ENCODE measurements at regions of chr17 and their contacts with region 1.

Region 1: DNA sequence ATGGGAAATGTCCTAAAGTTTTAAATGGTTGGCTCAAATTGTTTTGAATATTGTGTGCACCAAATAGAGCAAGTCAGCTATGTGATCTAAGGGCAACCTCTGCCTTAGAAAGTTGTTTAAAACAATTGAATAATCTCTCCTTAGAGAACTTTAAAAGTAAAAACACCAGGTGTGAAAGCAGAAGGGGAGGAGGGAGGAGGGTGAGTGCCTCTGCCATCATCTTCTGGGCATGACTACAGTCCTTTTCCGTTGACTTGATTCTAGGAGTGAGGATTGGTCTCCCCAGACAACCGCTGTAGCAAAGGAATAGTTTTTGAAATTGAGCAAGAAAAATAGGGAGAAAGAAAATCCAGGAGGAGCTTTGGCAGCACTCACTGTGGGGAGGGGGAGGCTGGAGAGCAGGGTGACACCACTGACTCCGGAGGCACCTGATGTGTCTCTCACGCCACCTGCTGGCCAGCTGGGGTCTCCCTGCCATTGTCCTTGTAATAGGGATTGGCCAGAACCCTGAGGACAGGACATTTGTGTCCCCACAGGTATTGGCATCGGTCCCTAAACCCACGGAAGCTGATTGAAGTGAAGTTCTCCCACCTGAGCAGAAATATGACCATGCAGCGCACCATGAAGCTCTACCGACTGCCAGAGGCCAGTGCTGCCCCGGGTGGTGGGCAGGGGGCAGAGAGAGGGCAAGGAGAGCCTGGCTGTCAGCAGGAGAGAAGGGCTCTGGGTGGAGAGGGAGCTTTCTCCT is 33.3 kb downstream of the PLCD3 start:
- DNase-seq: peak; percentile 96
- H3K4me3 ChIP-seq: no peak overlapping the region
- H3K27ac ChIP-seq: peak overlapping the region; percentile 61 to 91 (median 76)
- H3K4me1 ChIP-seq: peaks cover 42 to 54% (median 48%) of the 10 kb centered on the region in 4 donors
- H3K27me3 ChIP-seq: no peaks in the 10 kb centered on the region
- CTCF ChIP-seq: peak; percentile 85 to 92 (median 90)
- EP300 ChIP-seq: no peak
- POLR2A ChIP-seq: no peak

Region 2: DNA sequence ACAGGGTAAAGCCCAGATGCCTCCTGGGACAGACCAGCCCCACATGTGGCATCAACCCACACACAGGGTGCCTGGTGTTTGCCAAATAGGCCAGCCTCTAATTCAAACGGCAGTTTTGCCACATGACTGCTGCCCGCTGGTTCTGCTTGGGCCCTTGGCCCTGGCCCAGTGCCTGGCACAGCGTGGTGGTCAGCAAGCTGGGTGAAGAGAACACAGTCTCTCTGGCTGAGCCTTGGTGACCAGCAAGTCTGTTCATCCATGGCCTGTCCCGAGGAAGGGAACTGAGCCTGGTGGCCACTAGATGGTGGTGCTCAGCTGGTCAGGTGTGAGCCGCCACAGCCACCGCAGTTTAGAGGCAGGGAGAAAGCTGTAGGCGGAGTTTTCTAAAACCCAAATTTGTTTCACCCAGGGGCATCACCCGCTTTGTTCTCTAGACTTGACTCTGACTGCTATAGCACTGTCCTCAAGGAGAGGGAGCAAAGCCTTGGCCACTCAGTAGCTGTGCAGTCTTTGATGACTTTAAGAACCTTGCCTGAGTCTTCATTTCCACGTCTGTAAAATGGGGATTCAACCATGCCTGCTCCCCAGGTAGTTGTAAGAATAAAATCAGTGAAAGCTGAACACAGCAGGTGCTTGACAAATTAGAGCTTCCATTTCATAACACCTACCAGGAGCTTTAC is 179.0 kb before region 1 on chr17:
- intact Hi-C with region 1: loop called (anchors 2 kb)
- DNase-seq: no peak
- H3K4me3 ChIP-seq: no peak overlapping the region
- H3K27ac ChIP-seq: peak overlapping the region in 1 of 4 donors; percentile 5
- H3K4me1 ChIP-seq: peaks cover 25 to 36% (median 29%) of the 10 kb centered on the region in 4 donors
- H3K27me3 ChIP-seq: peaks cover 0 to 2% (median 0%) of the 10 kb centered on the region in 4 donors
- CTCF ChIP-seq: peak; percentile 81 to 94 (median 88)
- EP300 ChIP-seq: no peak
- POLR2A ChIP-seq: no peak

Region 3: DNA sequence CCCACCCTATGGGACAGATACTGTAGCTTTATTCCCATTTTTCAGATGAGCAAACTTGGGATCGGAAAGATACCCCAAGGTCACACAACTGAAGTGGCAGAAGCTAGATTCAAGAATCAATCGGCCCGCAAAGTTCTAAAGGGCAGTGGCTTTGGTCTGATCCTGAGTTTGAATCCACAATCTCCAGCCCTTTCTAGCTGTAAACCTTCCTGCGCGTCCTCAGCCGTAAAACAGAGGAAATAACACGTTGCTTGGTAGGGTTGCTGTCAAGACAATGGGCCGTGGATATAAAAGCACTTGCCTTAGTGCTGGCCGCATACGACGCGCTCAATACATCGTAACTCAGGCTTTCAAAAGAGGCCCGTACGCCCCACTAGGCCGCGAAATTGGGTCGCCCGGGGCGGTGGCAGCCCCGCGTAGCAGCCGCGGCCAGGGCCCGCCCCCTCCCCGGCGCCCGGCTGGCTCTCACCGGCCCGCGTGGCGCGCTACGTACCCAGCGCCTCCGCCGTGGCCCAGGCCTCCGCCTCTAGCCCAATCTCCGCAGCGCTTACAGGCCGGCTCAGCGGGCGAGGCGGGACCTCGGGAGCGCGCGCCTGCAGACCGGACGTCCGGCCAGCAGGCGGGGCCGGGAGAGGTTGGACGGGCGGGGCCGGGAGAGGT is 47.9 kb before region 1 on chr17 and contains the start of gene DCAKD:
- intact Hi-C with region 1: loop called (anchors 5 kb)
- DNase-seq: peak; percentile 94
- H3K4me3 ChIP-seq: peak within 1 kb of the TSS; percentile 61 to 79 (median 66)
- H3K27ac ChIP-seq: peak within 1 kb of the TSS; percentile 89 to 96 (median 92)
- H3K4me1 ChIP-seq: peaks cover 12 to 35% (median 30%) of the 10 kb centered on the region in 4 donors
- H3K27me3 ChIP-seq: no peaks in the 10 kb centered on the region
- CTCF ChIP-seq: peak in 1 of 3 experiments; percentile 10
- EP300 ChIP-seq: no peak
- POLR2A ChIP-seq: peak; percentile 78
- total RNA-seq, gene DCAKD: 50.3 to 68.8 (median 57.9) TPM

Region 4: GRCh38 chr17:45172454-45173286 is 73.6 kb after region 1 on chr17:
- intact Hi-C with region 1: no loop called
- DNase-seq: no peak
- H3K4me3 ChIP-seq: peak overlapping the region; percentile 48 to 63 (median 52)
- H3K27ac ChIP-seq: peak overlapping the region; percentile 88 to 97 (median 90)
- H3K4me1 ChIP-seq: peaks cover 25 to 57% (median 54%) of the 10 kb centered on the region in 4 donors
- H3K27me3 ChIP-seq: no peaks in the 10 kb centered on the region
- CTCF ChIP-seq: peak in 1 of 3 experiments; percentile 8
- EP300 ChIP-seq: no peak
- POLR2A ChIP-seq: no peak